ENCODE measurements at regions of chr4 and their contacts with region 1.

Region 1: DNA sequence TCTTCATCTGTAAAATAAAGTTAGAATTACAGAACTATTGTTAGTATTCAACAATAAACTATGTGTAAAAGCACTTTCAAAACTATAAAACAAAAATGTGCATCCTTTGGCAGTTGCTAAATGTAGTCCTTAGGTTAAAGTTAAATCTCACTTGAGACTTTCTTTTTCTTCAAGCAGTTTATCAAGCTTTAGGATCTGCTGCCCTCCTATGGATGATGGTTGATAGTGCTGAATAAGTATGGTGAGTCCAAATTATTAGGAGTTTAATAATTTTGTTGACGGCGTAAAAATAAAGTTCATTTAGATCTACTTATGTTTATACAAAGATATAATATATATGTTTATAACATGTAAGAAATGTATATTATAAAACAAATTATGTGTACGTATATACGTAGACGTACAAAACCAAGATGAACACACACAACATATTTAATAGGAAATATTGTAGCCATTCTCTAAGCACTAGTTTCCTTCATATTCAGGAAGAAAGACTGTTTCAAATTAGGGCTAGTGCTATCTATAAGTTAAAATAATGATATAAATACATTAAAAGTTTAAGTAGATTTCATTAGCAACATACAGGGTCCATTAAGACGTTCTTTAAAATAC is 22.3 kb downstream of the UGT2A2 start:
- DNase-seq: peak; percentile 12
- ATAC-seq: no peak
- H3K4me3 ChIP-seq: no peak overlapping the region
- H3K27ac ChIP-seq: no peak overlapping the region
- H3K4me1 ChIP-seq: no peaks in the 10 kb centered on the region
- H3K27me3 ChIP-seq: no peaks in the 10 kb centered on the region
- CTCF ChIP-seq: peak; percentile 43
- POLR2A ChIP-seq: no peak
- RAD21 ChIP-seq: peak; percentile 50

Region 2: GRCh38 chr4:68299492-68300457 is 1317.4 kb before region 1 on chr4:
- CTCF ChIA-PET with region 1: no interaction called
- POLR2A ChIA-PET with region 1: no interaction called
- dilution Hi-C with region 1: no loop called
- in situ Hi-C with region 1: loop called (anchors 25 kb)
- intact Hi-C with region 1: no loop called
- DNase-seq: no peak
- ATAC-seq: no peak
- H3K4me3 ChIP-seq: no peak overlapping the region
- H3K27ac ChIP-seq: no peak overlapping the region
- H3K4me1 ChIP-seq: no peaks in the 10 kb centered on the region
- H3K27me3 ChIP-seq: peaks cover 2% of the 10 kb centered on the region; the same call in 1 of the 2 replicates
- CTCF ChIP-seq: no peak
- POLR2A ChIP-seq: no peak
- RAD21 ChIP-seq: no peak

Region 3: GRCh38 chr4:69668680-69669079 is 51.5 kb after region 1 on chr4:
- CTCF ChIA-PET with region 1: no interaction called
- POLR2A ChIA-PET with region 1: no interaction called
- dilution Hi-C with region 1: no loop called
- in situ Hi-C with region 1: no loop called
- intact Hi-C with region 1: no loop called
- DNase-seq: no peak
- ATAC-seq: no peak
- H3K4me3 ChIP-seq: no peak overlapping the region
- H3K27ac ChIP-seq: no peak overlapping the region
- H3K4me1 ChIP-seq: no peaks in the 10 kb centered on the region
- H3K27me3 ChIP-seq: no peaks in the 10 kb centered on the region
- CTCF ChIP-seq: no peak
- POLR2A ChIP-seq: no peak
- RAD21 ChIP-seq: no peak